ENCODE measurements at regions of chr10 and their contacts with region 1.

Region 1: DNA sequence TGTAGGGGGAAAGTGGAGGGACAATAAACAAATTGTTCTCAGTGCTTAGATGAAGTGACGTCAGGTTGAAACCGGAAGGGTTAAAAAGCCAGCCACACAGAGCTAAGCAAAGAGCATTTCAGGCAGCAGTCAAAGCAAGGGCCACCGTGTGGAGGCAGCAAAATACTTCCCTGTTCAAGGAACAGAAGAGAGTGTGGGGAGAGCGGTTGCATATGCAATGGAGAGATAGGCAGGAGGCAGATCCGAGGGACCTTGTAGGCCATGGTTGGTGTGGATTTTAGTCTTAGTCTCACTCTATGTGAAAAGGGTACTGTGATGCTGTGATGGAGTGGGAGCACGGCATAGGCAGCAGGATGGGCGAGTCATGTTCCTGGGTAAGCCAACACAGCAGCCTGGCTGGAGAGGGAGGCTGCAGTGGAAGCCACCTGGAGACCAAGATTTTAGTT is 3.8 kb upstream of the STN1 start:
- DNase-seq: peak; percentile 82 to 91 (median 87)
- H3K4me3 ChIP-seq: peak overlapping the region in 1 of 7 experiments; percentile 43
- H3K27ac ChIP-seq: no peak overlapping the region
- H3K4me1 ChIP-seq: peaks cover 11 to 37% (median 25%) of the 10 kb centered on the region in 4 experiments
- H3K27me3 ChIP-seq: no peaks in the 10 kb centered on the region

Region 2: DNA sequence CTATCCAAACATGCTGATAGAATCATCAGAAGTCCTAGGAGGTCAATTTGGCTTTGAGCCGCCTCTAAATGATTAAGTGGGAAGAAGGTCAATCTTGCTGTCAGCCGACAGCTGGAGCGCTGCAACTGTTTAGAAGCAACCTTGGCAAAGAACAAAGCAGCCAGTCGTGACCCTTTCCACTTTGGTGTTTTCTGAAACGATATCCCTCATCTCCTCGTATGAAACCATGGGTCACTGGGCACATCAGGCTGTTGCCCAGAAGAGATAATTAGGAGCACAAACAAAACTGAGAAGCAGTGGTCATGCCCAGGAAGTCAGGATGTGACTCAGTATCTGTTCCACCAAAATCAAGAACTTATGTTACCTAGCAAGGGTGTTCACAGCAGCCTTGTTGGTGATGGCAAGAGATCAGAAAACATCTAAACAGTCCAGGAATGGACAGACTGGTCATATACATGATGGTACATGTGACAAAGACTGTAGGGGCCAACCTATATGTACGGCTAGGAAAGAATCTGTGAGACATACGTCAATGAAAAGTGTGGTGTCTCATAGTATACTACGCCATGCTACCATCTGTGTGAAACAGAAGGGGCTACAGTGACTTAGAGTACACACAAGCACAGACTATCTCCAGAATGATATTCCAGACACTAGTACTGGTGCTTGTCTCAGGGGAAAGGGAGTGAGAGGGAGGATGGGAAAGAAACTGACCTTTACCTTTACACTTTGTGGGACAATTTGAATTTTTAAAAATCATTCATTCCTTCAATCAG is 26.2 kb before region 1 on chr10:
- CTCF ChIA-PET with region 1: interaction called, 11 read pairs
- POLR2A ChIA-PET with region 1: interaction called, 4 read pairs
- DNase-seq: no peak
- H3K4me3 ChIP-seq: no peak overlapping the region
- H3K27ac ChIP-seq: no peak overlapping the region
- H3K4me1 ChIP-seq: peaks cover 0 to 8% (median 3%) of the 10 kb centered on the region in 4 experiments
- H3K27me3 ChIP-seq: no peaks in the 10 kb centered on the region

Region 3: GRCh38 chr10:103911021-103911459 is 10.7 kb before region 1 on chr10:
- CTCF ChIA-PET with region 1: interaction called, 11 read pairs
- POLR2A ChIA-PET with region 1: no interaction called
- DNase-seq: peak; percentile 52 to 90 (median 88)
- H3K4me3 ChIP-seq: peak overlapping the region in 6 of 7 experiments; percentile 13 to 65 (median 50)
- H3K27ac ChIP-seq: peak overlapping the region; percentile 48 to 75
- H3K4me1 ChIP-seq: peaks cover 42 to 83% (median 66%) of the 10 kb centered on the region in 4 experiments
- H3K27me3 ChIP-seq: no peaks in the 10 kb centered on the region

Region 4: GRCh38 chr10:103998803-103999202 is 77.0 kb after region 1 on chr10:
- CTCF ChIA-PET with region 1: no interaction called
- POLR2A ChIA-PET with region 1: no interaction called
- DNase-seq: no peak
- H3K4me3 ChIP-seq: no peak overlapping the region
- H3K27ac ChIP-seq: no peak overlapping the region
- H3K4me1 ChIP-seq: no peaks in the 10 kb centered on the region
- H3K27me3 ChIP-seq: no peaks in the 10 kb centered on the region

Measured in common myeloid progenitor, CD34-positive (primary cell).